GM13977 (cell line): ENCODE measurements at regions of chr14 and their contacts with region 1.

Region 1: GRCh38 chr14:81464247-81465002 is 64.3 kb upstream of the STON2 start:
- DNase-seq: peak; percentile 71
- CTCF ChIP-seq: peak; percentile 84

Region 2: DNA sequence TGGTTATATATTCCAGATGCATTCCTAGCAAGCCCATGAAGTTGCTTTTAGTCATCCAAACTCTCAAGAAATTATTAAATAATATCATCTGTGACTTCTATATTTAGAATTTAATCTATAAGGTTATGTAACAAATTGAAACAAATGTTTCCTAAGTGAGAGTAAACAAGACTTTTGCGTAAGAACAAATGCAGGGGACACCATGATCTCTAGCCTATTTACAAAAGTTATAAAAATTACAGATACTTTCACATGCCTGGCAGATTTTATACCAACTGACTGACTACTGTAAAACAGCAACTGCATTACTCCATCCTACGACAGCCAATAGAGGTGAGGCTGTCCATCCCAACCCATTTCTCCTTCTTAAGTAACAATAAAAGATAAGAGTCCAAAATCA is 1232.7 kb before region 1 on chr14:
- in situ Hi-C with region 1: no loop called
- DNase-seq: no peak
- CTCF ChIP-seq: no peak

Region 3: GRCh38 chr14:80954687-80955299 is 509.6 kb before region 1 on chr14:
- in situ Hi-C with region 1: loop called (anchors 25 kb)
- DNase-seq: peak; percentile 73
- CTCF ChIP-seq: peak; percentile 83

Region 4: DNA sequence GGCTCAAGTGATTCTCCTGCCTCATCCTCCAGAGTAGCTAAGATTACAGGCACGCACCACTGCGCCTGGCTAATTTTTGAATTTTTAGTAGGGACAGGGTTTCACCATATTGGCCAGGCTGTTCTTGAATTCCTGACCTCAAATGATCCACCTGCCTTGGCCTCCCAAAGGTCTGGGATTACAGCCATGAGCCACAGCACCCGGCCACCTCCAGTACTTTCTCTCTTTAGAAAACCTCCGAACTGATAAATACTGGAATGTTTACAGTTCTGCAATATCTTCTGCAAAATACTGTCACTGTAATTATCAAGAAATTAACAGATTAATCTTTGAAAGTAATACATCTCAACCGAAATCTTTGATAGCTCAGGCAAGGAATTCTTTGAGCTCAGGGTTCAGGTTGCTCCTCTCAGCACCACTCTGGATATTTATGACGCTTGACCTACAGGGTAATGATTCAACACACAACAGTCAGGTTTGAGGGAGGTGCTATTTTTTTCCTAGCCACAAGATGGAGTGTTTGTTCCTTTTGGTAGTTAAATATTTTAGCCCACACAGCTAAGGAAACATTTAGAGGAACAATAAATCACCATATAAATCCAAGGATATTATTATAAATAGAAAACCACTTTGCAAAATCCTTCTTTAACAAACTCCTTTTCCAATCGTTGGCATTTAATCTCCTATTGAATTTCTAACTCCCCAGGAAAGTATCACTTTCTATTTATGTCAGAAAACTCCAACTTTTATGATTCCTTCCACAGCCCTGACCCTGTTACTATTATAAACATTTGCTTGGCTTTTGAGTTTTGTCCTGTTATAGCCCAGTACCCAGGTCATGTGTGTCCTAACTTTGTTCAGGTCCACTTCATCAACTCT is 195.1 kb before region 1 on chr14:
- in situ Hi-C with region 1: loop called (anchors 10 kb)
- DNase-seq: peak; percentile 78
- CTCF ChIP-seq: peak; percentile 70

Region 5: DNA sequence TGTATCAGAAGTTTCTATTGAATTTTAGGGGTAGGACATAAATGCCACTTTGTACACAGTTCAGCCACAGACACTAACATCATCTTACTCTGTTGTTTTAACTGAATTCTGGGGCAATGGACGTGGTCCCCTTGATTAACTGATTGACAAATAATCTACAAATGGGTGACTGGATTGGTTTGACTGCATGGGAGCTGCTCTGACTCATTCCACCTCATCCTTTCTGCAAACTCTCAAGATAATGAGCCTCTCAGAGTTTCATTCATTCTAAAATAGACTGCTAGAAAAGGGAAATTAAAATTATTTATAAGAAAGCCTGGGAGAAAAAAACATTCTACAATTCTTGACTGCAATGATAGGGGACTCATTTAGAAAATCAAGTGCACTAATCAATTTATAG is 639.6 kb after region 1 on chr14:
- in situ Hi-C with region 1: no loop called
- DNase-seq: no peak
- CTCF ChIP-seq: no peak